GM12878 (cell line): ENCODE measurements at regions of chr3 and their contacts with region 1.

Region 1: DNA sequence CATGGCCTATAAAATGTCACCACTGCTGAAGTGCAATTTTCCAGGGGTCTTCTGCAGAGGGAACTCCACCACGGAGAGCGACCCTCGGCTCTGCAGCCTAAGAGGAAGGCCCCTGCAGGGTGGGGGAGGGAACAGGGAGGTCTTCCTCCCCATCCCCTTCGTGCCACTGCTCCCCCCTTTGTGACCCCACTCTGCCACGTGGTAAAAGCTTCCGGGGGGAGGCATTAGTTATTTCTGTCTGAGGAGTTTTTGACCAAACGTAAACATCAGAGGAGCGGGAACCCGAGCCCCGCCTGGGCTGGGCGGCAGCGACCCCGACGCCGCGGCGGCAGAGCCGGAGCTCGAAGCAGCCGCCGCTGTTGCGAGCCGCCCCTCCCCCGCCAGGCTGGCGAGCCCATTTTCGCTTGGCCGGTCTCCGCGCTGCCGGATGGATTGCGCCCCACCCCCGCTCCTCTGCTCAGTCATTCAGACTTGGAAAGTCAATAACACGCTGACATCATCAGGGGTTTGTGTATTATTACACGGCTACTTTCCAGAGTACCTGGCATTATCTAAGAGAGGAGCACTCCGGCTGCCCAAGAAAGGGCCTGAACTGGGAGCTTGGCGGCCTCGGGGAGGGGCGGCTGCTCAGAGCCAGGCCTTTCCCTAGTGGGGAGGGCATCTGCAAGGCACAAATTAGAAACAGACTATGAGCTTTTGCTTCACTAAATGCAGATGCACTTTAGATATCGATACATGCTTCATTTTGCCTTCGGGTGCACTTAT is 162.5 kb upstream of the TBL1XR1 start:
- DNase-seq: peak; percentile 87
- ATAC-seq: peak; percentile 82
- H3K4me3 ChIP-seq: peak overlapping the region; percentile 52; the same call in 1 of the 2 replicates
- H3K27ac ChIP-seq: peak overlapping the region; percentile 81
- H3K4me1 ChIP-seq: peaks cover 33% of the 10 kb centered on the region
- H3K27me3 ChIP-seq: no peaks in the 10 kb centered on the region
- CTCF ChIP-seq: peak in 2 of 3 experiments; percentile 5 to 32; a peak in 2 of 6 replicates
- EP300 ChIP-seq: peak; percentile 81 to 96; a peak in 3 of 4 replicates
- POLR2A ChIP-seq: peak; percentile 47; the same call in 1 of the 2 replicates
- RAD21 ChIP-seq: peak; percentile 61

Region 2: GRCh38 chr3:177050501-177051237 is 309.1 kb before region 1 on chr3:
- CTCF ChIA-PET with region 1: interaction called, 3 read pairs
- POLR2A ChIA-PET with region 1: no interaction called
- RAD21 ChIA-PET with region 1: interaction called, 8 read pairs
- SMC1A ChIA-PET with region 1: interaction called, 5 read pairs
- in situ Hi-C with region 1: loop called (anchors 5 kb)
- intact Hi-C with region 1: loop called (anchors 5 kb)
- DNase-seq: no peak
- ATAC-seq: peak; percentile 75
- H3K4me3 ChIP-seq: no peak overlapping the region
- H3K27ac ChIP-seq: no peak overlapping the region
- H3K4me1 ChIP-seq: no peaks in the 10 kb centered on the region
- H3K27me3 ChIP-seq: no peaks in the 10 kb centered on the region
- CTCF ChIP-seq: peak; percentile 22 to 65 (median 38); a peak in 4 of 6 replicates
- EP300 ChIP-seq: no peak
- POLR2A ChIP-seq: no peak
- RAD21 ChIP-seq: peak; percentile 73

Region 3: GRCh38 chr3:177102553-177102952 is 257.2 kb before region 1 on chr3:
- CTCF ChIA-PET with region 1: no interaction called
- POLR2A ChIA-PET with region 1: no interaction called
- RAD21 ChIA-PET with region 1: no interaction called
- SMC1A ChIA-PET with region 1: no interaction called
- in situ Hi-C with region 1: no loop called
- intact Hi-C with region 1: no loop called
- DNase-seq: no peak
- ATAC-seq: no peak
- H3K4me3 ChIP-seq: no peak overlapping the region
- H3K27ac ChIP-seq: no peak overlapping the region
- H3K4me1 ChIP-seq: peaks cover 6% of the 10 kb centered on the region
- H3K27me3 ChIP-seq: no peaks in the 10 kb centered on the region
- CTCF ChIP-seq: no peak
- EP300 ChIP-seq: no peak
- POLR2A ChIP-seq: no peak
- RAD21 ChIP-seq: no peak

Region 4: GRCh38 chr3:177249203-177249602 is 110.6 kb before region 1 on chr3:
- CTCF ChIA-PET with region 1: no interaction called
- POLR2A ChIA-PET with region 1: no interaction called
- RAD21 ChIA-PET with region 1: no interaction called
- SMC1A ChIA-PET with region 1: no interaction called
- in situ Hi-C with region 1: no loop called
- intact Hi-C with region 1: loop called (anchors 5 kb)
- DNase-seq: no peak
- ATAC-seq: no peak
- H3K4me3 ChIP-seq: no peak overlapping the region
- H3K27ac ChIP-seq: no peak overlapping the region
- H3K4me1 ChIP-seq: peaks cover 17% of the 10 kb centered on the region
- H3K27me3 ChIP-seq: no peaks in the 10 kb centered on the region
- CTCF ChIP-seq: no peak
- EP300 ChIP-seq: no peak
- POLR2A ChIP-seq: no peak
- RAD21 ChIP-seq: no peak

Region 5: DNA sequence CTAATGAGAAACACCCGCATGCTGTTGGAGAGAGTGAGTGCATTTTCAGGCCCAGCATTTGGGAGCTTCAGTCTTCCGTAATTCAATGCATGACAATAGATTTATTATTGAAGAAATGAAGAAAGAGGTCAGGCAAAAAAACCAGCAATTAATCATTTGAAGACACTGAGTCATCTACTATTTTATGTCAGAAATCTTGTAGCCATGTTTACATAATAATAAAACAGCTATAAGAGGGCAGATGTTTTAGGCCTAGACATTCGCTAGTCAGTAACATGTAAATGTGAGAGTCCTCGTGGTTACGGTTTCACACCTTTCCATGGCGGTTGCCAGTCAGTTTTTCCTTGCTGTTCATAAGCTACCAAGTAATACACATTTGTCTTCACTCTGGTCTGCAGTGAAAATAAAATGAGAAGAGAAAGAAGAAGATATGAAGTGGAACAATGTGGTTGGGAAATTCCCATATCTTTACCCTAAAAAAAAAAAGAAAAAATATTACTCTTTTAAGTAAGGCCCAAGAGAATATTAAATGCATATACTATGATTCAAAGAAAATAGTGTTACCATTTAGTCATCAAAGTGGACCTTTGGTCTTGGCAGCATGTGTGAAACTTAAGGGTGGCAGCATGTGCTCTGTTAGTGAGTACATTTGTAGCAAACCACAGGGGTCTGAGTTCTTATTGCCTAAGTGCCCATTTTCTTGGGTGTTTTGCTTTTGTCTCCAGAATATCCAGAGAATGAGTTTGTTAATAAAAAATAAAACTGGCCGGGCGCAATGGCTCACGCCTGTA is 22.0 kb before region 1 on chr3:
- CTCF ChIA-PET with region 1: interaction called, 5 read pairs
- POLR2A ChIA-PET with region 1: no interaction called
- RAD21 ChIA-PET with region 1: interaction called, 6 read pairs
- SMC1A ChIA-PET with region 1: interaction called, 10 read pairs
- in situ Hi-C with region 1: no loop called
- intact Hi-C with region 1: no loop called
- DNase-seq: peak; percentile 87
- ATAC-seq: peak; percentile 89
- H3K4me3 ChIP-seq: no peak overlapping the region
- H3K27ac ChIP-seq: peak overlapping the region; percentile 73
- H3K4me1 ChIP-seq: peaks cover 24% of the 10 kb centered on the region
- H3K27me3 ChIP-seq: no peaks in the 10 kb centered on the region
- CTCF ChIP-seq: no peak
- EP300 ChIP-seq: peak; percentile 50 to 58; a peak in 3 of 4 replicates
- POLR2A ChIP-seq: no peak
- RAD21 ChIP-seq: no peak

Region 6: DNA sequence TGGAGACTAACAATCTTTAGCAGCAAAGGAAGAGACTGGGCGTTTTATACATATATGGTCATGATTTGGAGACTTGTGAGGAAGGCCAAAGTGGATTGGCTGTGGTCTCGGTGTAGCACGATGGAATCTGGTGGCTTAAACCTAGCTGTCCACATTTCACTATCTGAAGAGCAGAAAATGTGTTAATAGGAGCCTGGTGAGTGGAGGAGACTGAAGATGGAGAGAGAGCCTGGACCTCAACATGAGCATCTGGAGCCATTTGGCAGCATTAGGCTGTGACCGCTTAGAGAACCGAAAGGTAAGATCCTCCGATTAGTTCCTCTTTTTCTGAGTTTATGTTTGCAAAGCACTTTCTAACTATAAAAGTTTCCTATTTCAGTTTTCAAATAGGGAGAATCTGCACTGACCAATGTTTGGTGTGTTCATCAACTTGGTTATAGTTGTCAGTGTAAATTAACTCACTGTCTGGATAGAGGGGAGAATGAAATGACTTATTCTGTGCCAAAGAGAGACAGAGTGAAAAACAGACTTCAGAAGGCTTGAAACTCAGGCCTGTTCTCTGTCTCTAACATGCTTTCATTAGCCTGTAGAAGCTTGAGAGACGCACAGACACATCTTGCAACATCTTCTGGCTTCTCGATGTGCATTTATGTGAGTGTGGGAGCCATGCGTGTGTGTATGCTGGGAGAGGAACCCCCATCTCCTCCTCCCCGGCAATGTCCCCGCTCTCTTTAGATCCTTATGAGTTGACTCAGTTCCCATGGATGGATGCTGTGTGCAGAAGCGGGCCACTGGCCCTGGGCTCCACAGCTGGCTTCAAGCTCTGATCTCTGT is 82.3 kb after region 1 on chr3:
- CTCF ChIA-PET with region 1: no interaction called
- POLR2A ChIA-PET with region 1: no interaction called
- RAD21 ChIA-PET with region 1: no interaction called
- SMC1A ChIA-PET with region 1: no interaction called
- in situ Hi-C with region 1: no loop called
- intact Hi-C with region 1: loop called (anchors 5 kb)
- DNase-seq: peak; percentile 77
- ATAC-seq: peak; percentile 98
- H3K4me3 ChIP-seq: 0 out of 2 replicates have a peak overlapping the region, but pooled peaks have one; percentile 4
- H3K27ac ChIP-seq: peak overlapping the region; percentile 55
- H3K4me1 ChIP-seq: peaks cover 18% of the 10 kb centered on the region
- H3K27me3 ChIP-seq: no peaks in the 10 kb centered on the region
- CTCF ChIP-seq: no peak
- EP300 ChIP-seq: peak; percentile 47 to 59; a peak in 3 of 4 replicates
- POLR2A ChIP-seq: no peak
- RAD21 ChIP-seq: no peak

Region 7: GRCh38 chr3:178223876-178224275 is 864.1 kb after region 1 on chr3:
- CTCF ChIA-PET with region 1: no interaction called
- POLR2A ChIA-PET with region 1: no interaction called
- RAD21 ChIA-PET with region 1: no interaction called
- SMC1A ChIA-PET with region 1: no interaction called
- in situ Hi-C with region 1: no loop called
- intact Hi-C with region 1: no loop called
- DNase-seq: no peak
- ATAC-seq: no peak
- H3K4me3 ChIP-seq: no peak overlapping the region
- H3K27ac ChIP-seq: no peak overlapping the region
- H3K4me1 ChIP-seq: no peaks in the 10 kb centered on the region
- H3K27me3 ChIP-seq: no peaks in the 10 kb centered on the region
- CTCF ChIP-seq: no peak
- EP300 ChIP-seq: no peak
- POLR2A ChIP-seq: no peak
- RAD21 ChIP-seq: no peak